ENCODE measurements at regions of chr13 and their contacts with region 1.

Region 1: GRCh38 chr13:35393886-35394285 is 82.6 kb downstream of the MAB21L1 start:
- DNase-seq: no peak
- ATAC-seq: no peak

Region 2: DNA sequence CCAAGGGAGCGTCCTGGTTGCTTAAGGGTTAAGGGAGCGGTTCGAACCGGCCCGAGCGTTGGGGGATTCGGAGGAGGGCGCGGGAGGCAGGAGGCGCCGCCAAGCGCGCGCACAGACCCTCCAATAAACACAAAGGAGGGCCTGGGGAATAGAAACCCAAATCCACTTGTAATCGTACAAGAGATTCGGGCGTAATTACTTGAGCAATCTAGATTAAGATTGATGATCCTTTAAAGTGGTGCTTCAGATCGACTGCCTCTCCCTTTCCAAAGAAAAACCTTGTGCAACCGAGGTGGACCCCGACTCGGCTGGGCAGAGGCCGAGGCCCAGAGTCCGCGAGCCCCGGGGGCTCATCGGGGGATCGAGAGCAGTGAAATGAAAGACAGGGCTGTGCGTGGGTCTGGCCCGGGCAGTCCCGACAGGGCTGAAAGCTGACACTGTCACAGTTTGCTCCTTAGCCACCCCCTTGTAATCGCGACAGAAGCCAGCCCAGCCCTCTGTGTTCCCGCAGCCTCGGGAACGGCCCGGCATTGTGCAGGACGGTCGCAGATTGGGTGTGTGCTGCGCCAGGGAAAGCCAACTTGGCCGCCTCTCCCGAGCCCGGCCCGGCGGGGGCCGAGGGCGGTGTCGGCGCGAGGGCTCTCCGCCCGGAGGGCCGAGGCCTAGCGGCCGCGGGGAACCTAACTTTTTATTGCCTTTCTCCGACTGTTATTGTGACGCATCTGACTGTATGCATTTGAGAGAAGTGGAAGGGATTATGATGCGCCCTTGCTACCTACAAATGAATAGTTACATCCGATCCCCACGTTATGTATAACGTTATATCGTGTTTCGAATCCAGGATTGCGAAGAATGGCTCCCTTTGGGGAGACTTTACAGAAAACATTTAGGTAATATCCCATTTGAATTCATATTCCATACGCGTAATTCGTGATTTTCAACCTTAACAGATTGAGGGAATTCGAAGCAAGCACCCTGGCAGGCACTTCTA is 77.1 kb after region 1 on chr13:
- intact Hi-C with region 1: loop called (anchors 2 kb)
- DNase-seq: peak; percentile 67
- ATAC-seq: peak; percentile 95

Measured in Right ventricle myocardium inferior (tissue), 1 donor.